Caco-2 (cell line): ENCODE measurements at regions of chr7 and their contacts with region 1.

Region 1: GRCh38 chr7:139645572-139646523 is 122.4 kb downstream of the CLEC2L start:
- DNase-seq: peak; percentile 83 to 88
- H3K4me3 ChIP-seq: no peak overlapping the region
- H3K4me3 Mint-ChIP-seq: no peak overlapping the region
- H3K27ac Mint-ChIP-seq: peak overlapping the region; percentile 64
- H3K4me1 ChIP-seq: peaks cover 26% of the 10 kb centered on the region; the same call in 1 of the 2 replicates
- H3K4me1 Mint-ChIP-seq: peaks cover 61% of the 10 kb centered on the region
- H3K27me3 ChIP-seq: no peaks in the 10 kb centered on the region
- H3K27me3 Mint-ChIP-seq: no peaks in the 10 kb centered on the region
- CTCF ChIP-seq: peak; percentile 80 to 90

Region 2: GRCh38 chr7:139297795-139298194 is 348.1 kb before region 1 on chr7:
- CTCF ChIA-PET with region 1: no interaction called
- POLR2A ChIA-PET with region 1: no interaction called
- intact Hi-C with region 1: no loop called
- DNase-seq: peak; percentile 62 to 74
- H3K4me3 ChIP-seq: no peak overlapping the region
- H3K4me3 Mint-ChIP-seq: peak overlapping the region; percentile 58
- H3K27ac Mint-ChIP-seq: peak overlapping the region; percentile 56
- H3K4me1 ChIP-seq: peaks cover 60% of the 10 kb centered on the region
- H3K4me1 Mint-ChIP-seq: peaks cover 22% of the 10 kb centered on the region
- H3K27me3 ChIP-seq: no peaks in the 10 kb centered on the region
- H3K27me3 Mint-ChIP-seq: no peaks in the 10 kb centered on the region
- CTCF ChIP-seq: no peak

Region 3: DNA sequence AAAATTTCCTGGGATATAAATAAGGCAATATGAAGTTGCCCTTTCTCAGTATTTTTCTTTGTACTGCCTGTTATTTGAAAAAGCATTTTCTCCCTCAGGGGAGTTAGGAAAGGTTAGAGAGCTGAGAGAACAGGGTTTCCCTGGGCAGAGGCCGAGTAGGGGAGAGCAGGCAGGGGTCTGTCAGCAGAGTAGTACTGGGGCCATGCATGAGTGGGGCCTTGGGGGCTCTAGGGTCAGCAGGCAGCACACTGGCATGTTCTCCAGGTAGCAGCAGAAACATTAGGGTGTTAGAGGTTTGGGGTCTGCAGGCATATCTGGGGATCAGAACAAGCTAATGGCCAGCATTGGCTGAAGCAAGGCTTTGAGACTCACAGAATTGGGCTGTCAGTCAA is 218.8 kb before region 1 on chr7:
- CTCF ChIA-PET with region 1: no interaction called
- POLR2A ChIA-PET with region 1: no interaction called
- intact Hi-C with region 1: no loop called
- DNase-seq: no peak
- H3K4me3 ChIP-seq: no peak overlapping the region
- H3K4me3 Mint-ChIP-seq: no peak overlapping the region
- H3K27ac Mint-ChIP-seq: peak overlapping the region; percentile 30
- H3K4me1 ChIP-seq: peaks cover 14% of the 10 kb centered on the region
- H3K4me1 Mint-ChIP-seq: peaks cover 16% of the 10 kb centered on the region
- H3K27me3 ChIP-seq: no peaks in the 10 kb centered on the region
- H3K27me3 Mint-ChIP-seq: no peaks in the 10 kb centered on the region
- CTCF ChIP-seq: no peak

Region 4: GRCh38 chr7:139523199-139523941 is 122.5 kb before region 1 on chr7 and contains the start of gene CLEC2L:
- CTCF ChIA-PET with region 1: no interaction called
- POLR2A ChIA-PET with region 1: no interaction called
- intact Hi-C with region 1: no loop called
- DNase-seq: peak in 1 of 2 experiments; percentile 23
- H3K4me3 ChIP-seq: peak within 1 kb of the TSS; percentile 22; the same call in 1 of the 2 replicates
- H3K4me3 Mint-ChIP-seq: peak within 1 kb of the TSS; percentile 54
- H3K27ac Mint-ChIP-seq: no peak within 1 kb of the TSS
- H3K4me1 ChIP-seq: no peaks in the 10 kb centered on the region
- H3K4me1 Mint-ChIP-seq: no peaks in the 10 kb centered on the region
- H3K27me3 ChIP-seq: no peaks in the 10 kb centered on the region
- H3K27me3 Mint-ChIP-seq: peaks cover 9% of the 10 kb centered on the region
- CTCF ChIP-seq: no peak
- total RNA-seq, gene CLEC2L: not detected in 2 replicates

Region 5: GRCh38 chr7:139620676-139621344 is 25.0 kb before region 1 on chr7:
- CTCF ChIA-PET with region 1: interaction called, 11 read pairs
- POLR2A ChIA-PET with region 1: no interaction called
- intact Hi-C with region 1: no loop called
- DNase-seq: peak; percentile 61 to 82
- H3K4me3 ChIP-seq: no peak overlapping the region
- H3K4me3 Mint-ChIP-seq: no peak overlapping the region
- H3K27ac Mint-ChIP-seq: no peak overlapping the region
- H3K4me1 ChIP-seq: no peaks in the 10 kb centered on the region
- H3K4me1 Mint-ChIP-seq: peaks cover 4% of the 10 kb centered on the region
- H3K27me3 ChIP-seq: no peaks in the 10 kb centered on the region
- H3K27me3 Mint-ChIP-seq: no peaks in the 10 kb centered on the region
- CTCF ChIP-seq: peak; percentile 80 to 86

Region 6: GRCh38 chr7:139629392-139630082 is 16.3 kb before region 1 on chr7:
- CTCF ChIA-PET with region 1: interaction called, 4 read pairs
- POLR2A ChIA-PET with region 1: no interaction called
- intact Hi-C with region 1: loop called (anchors 1 kb)
- DNase-seq: peak in 1 of 2 experiments; percentile 24
- H3K4me3 ChIP-seq: no peak overlapping the region
- H3K4me3 Mint-ChIP-seq: no peak overlapping the region
- H3K27ac Mint-ChIP-seq: no peak overlapping the region
- H3K4me1 ChIP-seq: no peaks in the 10 kb centered on the region
- H3K4me1 Mint-ChIP-seq: no peaks in the 10 kb centered on the region
- H3K27me3 ChIP-seq: no peaks in the 10 kb centered on the region
- H3K27me3 Mint-ChIP-seq: no peaks in the 10 kb centered on the region
- CTCF ChIP-seq: peak in 1 of 2 experiments; percentile 20

Region 7: GRCh38 chr7:139680676-139681462 is 35.0 kb after region 1 on chr7:
- CTCF ChIA-PET with region 1: interaction called, 3 read pairs
- POLR2A ChIA-PET with region 1: interaction called, 3 read pairs
- intact Hi-C with region 1: loop called (anchors 1 kb)
- DNase-seq: no peak
- H3K4me3 ChIP-seq: no peak overlapping the region
- H3K4me3 Mint-ChIP-seq: peak overlapping the region; percentile 69
- H3K27ac Mint-ChIP-seq: peak overlapping the region; percentile 98
- H3K4me1 ChIP-seq: peaks cover 66% of the 10 kb centered on the region
- H3K4me1 Mint-ChIP-seq: peaks cover 47% of the 10 kb centered on the region
- H3K27me3 ChIP-seq: no peaks in the 10 kb centered on the region
- H3K27me3 Mint-ChIP-seq: no peaks in the 10 kb centered on the region
- CTCF ChIP-seq: no peak

Region 8: DNA sequence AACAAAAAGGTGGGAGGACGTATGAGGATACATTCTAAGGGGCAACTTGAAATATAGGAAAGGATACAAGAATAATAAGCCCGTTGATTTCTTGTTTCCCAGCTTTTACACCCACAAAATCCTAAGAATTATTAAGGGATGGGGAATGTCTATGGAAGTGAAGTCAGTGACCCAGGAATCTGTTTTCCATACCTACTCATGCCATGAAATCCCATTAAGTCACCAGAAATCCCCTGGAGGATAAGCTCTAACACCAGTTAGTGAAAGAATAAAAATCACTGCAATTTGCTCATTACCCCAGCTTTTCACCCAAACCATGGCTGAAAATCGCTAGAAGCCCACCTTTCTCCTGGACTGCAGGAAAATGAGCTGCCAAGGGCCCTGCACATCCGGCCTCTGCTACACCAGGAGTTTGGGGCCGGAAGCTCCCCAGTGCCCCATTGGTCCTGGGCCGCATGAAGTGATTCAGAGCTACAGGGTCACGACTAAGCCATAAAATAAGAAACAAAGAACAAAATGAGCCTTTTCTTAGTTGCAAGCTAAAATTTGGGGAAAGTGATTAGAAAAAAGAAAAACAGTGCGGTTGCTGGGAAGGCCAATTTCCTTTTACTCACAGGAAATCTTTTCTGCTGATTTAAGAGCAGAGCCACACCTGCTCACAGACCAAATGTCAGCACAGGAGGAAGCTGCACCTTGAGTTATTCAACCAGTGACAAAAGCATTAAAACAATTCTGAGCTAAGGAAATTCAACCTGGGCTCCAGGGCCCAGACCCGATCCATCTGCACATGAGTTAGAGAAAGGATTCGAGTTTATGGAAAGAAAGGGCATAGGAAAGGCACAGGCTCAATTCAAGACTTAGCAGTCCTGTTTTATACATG is 91.6 kb after region 1 on chr7:
- CTCF ChIA-PET with region 1: interaction called, 6 read pairs
- POLR2A ChIA-PET with region 1: no interaction called
- intact Hi-C with region 1: loop called (anchors 10 kb)
- DNase-seq: no peak
- H3K4me3 ChIP-seq: no peak overlapping the region
- H3K4me3 Mint-ChIP-seq: no peak overlapping the region
- H3K27ac Mint-ChIP-seq: no peak overlapping the region
- H3K4me1 ChIP-seq: peaks cover 20% of the 10 kb centered on the region
- H3K4me1 Mint-ChIP-seq: peaks cover 13% of the 10 kb centered on the region
- H3K27me3 ChIP-seq: no peaks in the 10 kb centered on the region
- H3K27me3 Mint-ChIP-seq: no peaks in the 10 kb centered on the region
- CTCF ChIP-seq: no peak

Region 9: GRCh38 chr7:139777948-139778841 is 132.3 kb after region 1 on chr7 and contains the start of gene HIPK2:
- CTCF ChIA-PET with region 1: interaction called, 4 read pairs
- POLR2A ChIA-PET with region 1: no interaction called
- intact Hi-C with region 1: loop called (anchors 2 kb)
- DNase-seq: peak; percentile 72 to 84
- H3K4me3 ChIP-seq: peak within 1 kb of the TSS; percentile 80
- H3K4me3 Mint-ChIP-seq: peak within 1 kb of the TSS; percentile 94
- H3K27ac Mint-ChIP-seq: peak within 1 kb of the TSS; percentile 75
- H3K4me1 ChIP-seq: no peaks in the 10 kb centered on the region; the same call in 1 of the 2 replicates
- H3K4me1 Mint-ChIP-seq: peaks cover 7% of the 10 kb centered on the region
- H3K27me3 ChIP-seq: no peaks in the 10 kb centered on the region
- H3K27me3 Mint-ChIP-seq: peaks cover 4% of the 10 kb centered on the region
- CTCF ChIP-seq: no peak
- total RNA-seq, gene HIPK2: 35.6 and 42.8 TPM in 2 replicates

Region 10: GRCh38 chr7:139829025-139829774 is 183.4 kb after region 1 on chr7 and contains the start of gene TBXAS1:
- CTCF ChIA-PET with region 1: no interaction called
- POLR2A ChIA-PET with region 1: no interaction called
- intact Hi-C with region 1: loop called (anchors 1 kb)
- DNase-seq: peak in 1 of 2 experiments; percentile 19
- H3K4me3 ChIP-seq: no peak within 1 kb of the TSS
- H3K4me3 Mint-ChIP-seq: no peak within 1 kb of the TSS
- H3K27ac Mint-ChIP-seq: no peak within 1 kb of the TSS
- H3K4me1 ChIP-seq: no peaks in the 10 kb centered on the region; the same call in 1 of the 2 replicates
- H3K4me1 Mint-ChIP-seq: peaks cover 8% of the 10 kb centered on the region
- H3K27me3 ChIP-seq: no peaks in the 10 kb centered on the region
- H3K27me3 Mint-ChIP-seq: peaks cover 5% of the 10 kb centered on the region
- CTCF ChIP-seq: no peak
- total RNA-seq, gene TBXAS1: 1.2 and 1.6 TPM in 2 replicates